ENCODE measurements at regions of chr1 and their contacts with region 1.

Region 1: GRCh38 chr1:207321079-207321789 is at the start of gene CD55:
- DNase-seq: peak; percentile 95 to 100 (median 98)
- ATAC-seq: peak; percentile 89
- H3K4me3 ChIP-seq: peak within 1 kb of the TSS; percentile 98
- H3K4me3 Mint-ChIP-seq: peak within 1 kb of the TSS; percentile 94
- H3K27ac ChIP-seq: peak within 1 kb of the TSS; percentile 92 to 96
- H3K27ac Mint-ChIP-seq: peak within 1 kb of the TSS; percentile 97
- H3K4me1 ChIP-seq: peaks cover 24% of the 10 kb centered on the region
- H3K4me1 Mint-ChIP-seq: peaks cover 45% of the 10 kb centered on the region
- H3K27me3 ChIP-seq: no peaks in the 10 kb centered on the region
- H3K27me3 Mint-ChIP-seq: no peaks in the 10 kb centered on the region
- CTCF ChIP-seq: no peak
- total RNA-seq, gene CD55: 218 to 229 TPM

Region 2: GRCh38 chr1:206925106-206925736 is 396.0 kb before region 1 on chr1:
- CTCF ChIA-PET with region 1: no interaction called
- POLR2A ChIA-PET with region 1: interaction called, 13 read pairs
- intact Hi-C with region 1: loop called in 1 of 2 experiments (anchors 10 kb)
- DNase-seq: peak in 9 of 14 experiments; percentile 41 to 85 (median 56)
- ATAC-seq: no peak
- H3K4me3 ChIP-seq: no peak overlapping the region
- H3K4me3 Mint-ChIP-seq: no peak overlapping the region
- H3K27ac ChIP-seq: peak overlapping the region; percentile 57 to 95
- H3K27ac Mint-ChIP-seq: no peak overlapping the region
- H3K4me1 ChIP-seq: peaks cover 56% of the 10 kb centered on the region
- H3K4me1 Mint-ChIP-seq: peaks cover 40% of the 10 kb centered on the region
- H3K27me3 ChIP-seq: no peaks in the 10 kb centered on the region
- H3K27me3 Mint-ChIP-seq: no peaks in the 10 kb centered on the region
- CTCF ChIP-seq: no peak

Region 3: DNA sequence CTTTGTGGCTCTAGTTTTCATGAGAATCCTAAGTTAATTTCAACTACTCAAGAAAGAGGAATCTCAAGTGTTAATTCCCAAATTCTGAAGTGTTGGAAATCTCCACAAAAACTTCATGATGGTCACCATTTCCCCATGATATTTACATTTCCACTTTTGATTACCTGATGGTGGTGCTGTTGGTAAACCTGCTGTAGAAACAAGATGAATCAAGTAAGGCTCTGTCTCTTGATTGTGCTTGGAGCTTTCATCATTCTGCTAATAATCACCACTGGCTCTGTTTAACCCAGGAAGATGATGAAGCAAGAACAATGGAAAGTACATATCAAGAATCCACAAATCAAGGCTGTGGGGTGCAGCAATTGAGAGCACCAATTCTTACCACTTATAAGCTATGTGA is 139.4 kb before region 1 on chr1:
- CTCF ChIA-PET with region 1: no interaction called
- POLR2A ChIA-PET with region 1: interaction called, 22 read pairs
- intact Hi-C with region 1: loop called in 1 of 2 experiments (anchors 10 kb)
- DNase-seq: peak in 3 of 14 experiments; percentile 30 to 47 (median 42)
- ATAC-seq: no peak
- H3K4me3 ChIP-seq: no peak overlapping the region
- H3K4me3 Mint-ChIP-seq: no peak overlapping the region
- H3K27ac ChIP-seq: no peak overlapping the region
- H3K27ac Mint-ChIP-seq: no peak overlapping the region
- H3K4me1 ChIP-seq: no peaks in the 10 kb centered on the region
- H3K4me1 Mint-ChIP-seq: no peaks in the 10 kb centered on the region
- H3K27me3 ChIP-seq: no peaks in the 10 kb centered on the region
- H3K27me3 Mint-ChIP-seq: peaks cover 11% of the 10 kb centered on the region
- CTCF ChIP-seq: peak; percentile 55

Region 4: DNA sequence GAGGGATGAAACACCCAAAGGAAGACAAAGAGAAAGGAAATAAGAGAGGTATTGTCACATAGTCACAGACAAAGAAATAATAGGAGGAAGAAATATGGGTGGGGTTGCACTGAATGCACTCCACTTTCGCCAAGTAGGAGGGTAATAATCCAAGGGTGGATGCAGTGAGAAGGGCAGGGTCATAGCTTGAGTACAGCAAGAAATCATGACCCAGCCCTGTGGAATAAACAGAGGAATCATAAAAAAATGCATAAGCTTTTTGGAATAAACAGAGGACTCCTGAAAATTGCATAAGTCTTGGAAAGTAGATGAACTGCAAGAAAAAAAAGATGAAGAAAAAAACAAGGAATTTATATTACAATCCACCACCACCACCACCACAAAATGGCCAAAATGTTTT is 52.9 kb before region 1 on chr1:
- CTCF ChIA-PET with region 1: no interaction called
- POLR2A ChIA-PET with region 1: no interaction called
- intact Hi-C with region 1: no loop called
- DNase-seq: no peak
- ATAC-seq: no peak
- H3K4me3 ChIP-seq: no peak overlapping the region
- H3K4me3 Mint-ChIP-seq: no peak overlapping the region
- H3K27ac ChIP-seq: no peak overlapping the region
- H3K27ac Mint-ChIP-seq: no peak overlapping the region
- H3K4me1 ChIP-seq: no peaks in the 10 kb centered on the region
- H3K4me1 Mint-ChIP-seq: no peaks in the 10 kb centered on the region
- H3K27me3 ChIP-seq: no peaks in the 10 kb centered on the region
- H3K27me3 Mint-ChIP-seq: no peaks in the 10 kb centered on the region
- CTCF ChIP-seq: no peak

Region 5: GRCh38 chr1:207282058-207282457 is 39.2 kb before region 1 on chr1:
- CTCF ChIA-PET with region 1: interaction called, 3 read pairs
- POLR2A ChIA-PET with region 1: interaction called, 65 read pairs
- intact Hi-C with region 1: loop called in 1 of 2 experiments (anchors 5 kb)
- DNase-seq: peak in 2 of 14 experiments; percentile 8 to 27
- ATAC-seq: peak; percentile 61
- H3K4me3 ChIP-seq: no peak overlapping the region
- H3K4me3 Mint-ChIP-seq: peak overlapping the region; percentile 2
- H3K27ac ChIP-seq: no peak overlapping the region
- H3K27ac Mint-ChIP-seq: peak overlapping the region; percentile 53
- H3K4me1 ChIP-seq: peaks cover 14% of the 10 kb centered on the region
- H3K4me1 Mint-ChIP-seq: peaks cover 66% of the 10 kb centered on the region
- H3K27me3 ChIP-seq: no peaks in the 10 kb centered on the region
- H3K27me3 Mint-ChIP-seq: no peaks in the 10 kb centered on the region
- CTCF ChIP-seq: no peak

Region 6: DNA sequence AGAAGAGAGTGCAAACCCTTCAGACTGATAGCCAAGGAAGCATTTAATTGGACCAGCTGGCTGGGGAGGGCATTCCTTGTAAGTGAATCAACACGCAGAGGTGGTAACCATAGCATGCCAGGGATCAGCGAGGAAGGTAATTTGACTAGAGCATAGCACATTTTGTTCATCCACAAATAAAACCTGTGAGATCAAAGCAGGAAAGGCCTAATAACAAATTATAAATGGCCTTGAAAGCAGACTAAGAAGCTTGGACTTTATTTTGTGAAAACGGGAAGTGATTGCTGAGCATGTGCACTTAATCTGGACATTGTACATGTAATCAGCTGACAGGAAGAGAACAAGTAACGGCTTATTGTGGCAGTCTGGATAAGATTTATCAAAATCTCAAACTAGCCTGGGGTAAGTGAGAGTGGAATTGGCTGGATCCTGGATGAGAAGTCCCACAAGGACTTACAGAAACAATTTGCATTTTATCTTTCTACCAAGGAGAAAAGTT is 11.4 kb before region 1 on chr1:
- CTCF ChIA-PET with region 1: interaction called, 3 read pairs
- POLR2A ChIA-PET with region 1: interaction called, 30 read pairs
- intact Hi-C with region 1: no loop called
- DNase-seq: peak in 2 of 14 experiments; percentile 22 to 26
- ATAC-seq: no peak
- H3K4me3 ChIP-seq: no peak overlapping the region
- H3K4me3 Mint-ChIP-seq: peak overlapping the region; percentile 32
- H3K27ac ChIP-seq: no peak overlapping the region
- H3K27ac Mint-ChIP-seq: peak overlapping the region; percentile 70
- H3K4me1 ChIP-seq: peaks cover 5% of the 10 kb centered on the region
- H3K4me1 Mint-ChIP-seq: peaks cover 22% of the 10 kb centered on the region
- H3K27me3 ChIP-seq: no peaks in the 10 kb centered on the region
- H3K27me3 Mint-ChIP-seq: no peaks in the 10 kb centered on the region
- CTCF ChIP-seq: no peak

Region 7: GRCh38 chr1:207404849-207405525 is 83.8 kb after region 1 on chr1:
- CTCF ChIA-PET with region 1: interaction called, 6 read pairs
- POLR2A ChIA-PET with region 1: interaction called, 10 read pairs
- intact Hi-C with region 1: loop called in 1 of 2 experiments (anchors 1 kb)
- DNase-seq: peak in 4 of 14 experiments; percentile 11 to 79 (median 72)
- ATAC-seq: peak; percentile 79
- H3K4me3 ChIP-seq: no peak overlapping the region
- H3K4me3 Mint-ChIP-seq: no peak overlapping the region
- H3K27ac ChIP-seq: no peak overlapping the region
- H3K27ac Mint-ChIP-seq: no peak overlapping the region
- H3K4me1 ChIP-seq: no peaks in the 10 kb centered on the region
- H3K4me1 Mint-ChIP-seq: no peaks in the 10 kb centered on the region
- H3K27me3 ChIP-seq: no peaks in the 10 kb centered on the region
- H3K27me3 Mint-ChIP-seq: no peaks in the 10 kb centered on the region
- CTCF ChIP-seq: peak; percentile 81